Naive thymus-derived CD4-positive, alpha-beta T cell (primary cell): ENCODE measurements at regions of chr6 and their contacts with region 1.

Region 1: GRCh38 chr6:53348371-53349208 is at the start of gene ELOVL5:
- DNase-seq: peak; percentile 78 to 97 (median 87)
- ATAC-seq: peak; percentile 87
- H3K4me3 ChIP-seq: peak within 1 kb of the TSS; percentile 65
- H3K4me3 Mint-ChIP-seq: peak within 1 kb of the TSS; percentile 91 to 100 (median 98)
- H3K27ac ChIP-seq: peak within 1 kb of the TSS; percentile 89
- H3K27ac Mint-ChIP-seq: peak within 1 kb of the TSS; percentile 85 to 99 (median 96)
- H3K4me1 ChIP-seq: peaks cover 23 to 30% of the 10 kb centered on the region in 2 donors
- H3K4me1 Mint-ChIP-seq: peaks cover 34 to 48% (median 46%) of the 10 kb centered on the region in 7 donors
- H3K27me3 ChIP-seq: no peaks in the 10 kb centered on the region
- H3K27me3 Mint-ChIP-seq: peaks cover 0 to 18% (median 0%) of the 10 kb centered on the region in 5 donors
- total RNA-seq, gene ELOVL5: 49.7 to 124 (median 71.3) TPM

Region 2: DNA sequence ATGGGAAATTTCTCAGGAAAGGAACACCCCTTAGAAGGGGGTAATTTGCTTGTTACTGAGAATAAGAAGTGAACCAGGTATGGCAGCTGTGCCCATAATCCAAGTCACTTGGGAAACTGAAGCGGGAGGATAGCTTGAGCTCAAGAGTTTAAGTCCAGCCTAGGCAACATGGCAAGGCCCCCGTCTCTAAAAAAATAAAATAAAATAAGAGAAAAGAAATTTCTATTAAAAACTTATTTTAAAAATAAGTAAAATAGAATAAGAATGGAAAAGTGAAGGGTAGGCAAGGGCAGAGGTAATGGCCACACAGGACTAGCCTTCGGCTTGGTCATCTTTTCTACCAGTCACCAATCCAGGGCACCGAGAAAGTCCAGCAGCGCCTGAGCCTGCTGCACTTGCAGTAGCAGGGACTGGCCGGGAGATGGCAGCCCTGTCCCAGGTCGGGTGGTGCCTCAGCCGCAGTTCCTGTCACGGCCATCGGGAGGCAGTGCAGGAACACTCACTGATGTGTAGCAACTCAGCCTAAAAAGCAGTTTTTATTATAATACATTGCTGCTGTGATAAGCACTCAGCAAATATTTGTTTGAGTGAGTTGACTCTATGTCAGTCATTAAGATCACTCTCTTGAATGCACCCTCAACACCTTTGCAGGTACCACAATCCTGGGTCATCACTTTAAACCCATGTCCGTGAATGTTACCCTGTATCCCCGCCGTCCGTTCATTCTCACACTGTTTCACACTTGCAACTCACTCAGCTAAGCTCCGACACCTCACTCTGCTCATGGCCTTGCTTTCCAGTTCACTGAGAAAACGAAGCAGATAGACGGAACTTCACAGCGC is 176.8 kb before region 1 on chr6:
- CTCF ChIA-PET with region 1: no interaction called
- POLR2A ChIA-PET with region 1: interaction called, 4 read pairs
- intact Hi-C with region 1: loop called in 1 of 2 experiments (anchors 1 kb)
- DNase-seq: peak; percentile 76 to 95 (median 87)
- ATAC-seq: peak; percentile 100
- H3K4me3 ChIP-seq: no peak overlapping the region
- H3K4me3 Mint-ChIP-seq: no peak overlapping the region
- H3K27ac ChIP-seq: no peak overlapping the region
- H3K27ac Mint-ChIP-seq: no peak overlapping the region
- H3K4me1 ChIP-seq: no peaks in the 10 kb centered on the region
- H3K4me1 Mint-ChIP-seq: peaks cover 0 to 6% (median 0%) of the 10 kb centered on the region in 7 donors
- H3K27me3 ChIP-seq: no peaks in the 10 kb centered on the region
- H3K27me3 Mint-ChIP-seq: peaks cover 0 to 3% (median 0%) of the 10 kb centered on the region in 5 donors

Region 3: DNA sequence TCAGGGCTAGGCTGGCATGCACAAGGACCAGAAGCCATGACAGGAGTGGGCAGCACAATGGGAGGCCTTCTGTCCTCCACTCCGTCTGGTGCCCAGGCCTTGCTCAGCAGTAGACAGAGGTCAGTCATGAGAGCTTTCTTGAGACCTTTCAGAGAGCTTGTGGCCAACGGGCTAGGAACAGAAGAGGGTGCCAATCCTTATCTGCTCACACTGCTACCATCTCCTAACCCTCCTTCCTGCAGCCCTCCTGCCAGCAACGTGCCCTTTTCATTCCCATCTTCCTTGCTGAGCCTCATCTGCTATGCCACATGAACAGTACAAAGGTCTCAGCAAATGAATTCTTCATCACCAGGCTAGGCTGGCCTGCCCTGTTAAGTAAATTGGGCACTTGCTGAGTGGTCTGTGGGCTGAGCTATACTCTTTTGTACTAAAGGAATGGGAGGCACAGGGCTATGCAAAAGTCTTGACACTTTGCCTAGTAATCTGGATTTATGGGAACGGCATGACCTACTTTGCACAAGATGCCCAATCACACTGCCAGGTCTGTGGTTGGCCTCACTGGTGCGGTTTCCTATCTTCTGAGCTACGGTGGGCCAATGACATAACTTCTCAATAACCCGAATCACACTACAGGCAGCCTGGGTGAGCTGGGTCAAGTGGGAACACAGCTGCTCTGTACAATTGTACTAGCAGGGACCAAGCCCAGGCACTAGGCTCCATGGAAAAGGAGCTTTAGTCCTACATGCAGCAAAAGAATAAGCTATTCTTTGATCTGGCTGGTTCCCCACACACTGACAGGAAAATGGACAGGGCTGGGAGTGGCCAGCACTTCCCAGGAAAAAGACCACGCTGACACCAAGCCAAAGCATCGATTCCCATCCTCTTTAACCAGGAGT is 47.7 kb before region 1 on chr6:
- CTCF ChIA-PET with region 1: interaction called, 4 read pairs
- POLR2A ChIA-PET with region 1: interaction called, 28 read pairs
- intact Hi-C with region 1: loop called (anchors 1 kb)
- DNase-seq: no peak
- ATAC-seq: peak; percentile 48
- H3K4me3 ChIP-seq: no peak overlapping the region
- H3K4me3 Mint-ChIP-seq: peak overlapping the region; percentile 5 to 74 (median 50)
- H3K27ac ChIP-seq: no peak overlapping the region
- H3K27ac Mint-ChIP-seq: peak overlapping the region; percentile 33 to 92 (median 68)
- H3K4me1 ChIP-seq: peaks cover 35 to 52% of the 10 kb centered on the region in 2 donors
- H3K4me1 Mint-ChIP-seq: peaks cover 53 to 84% (median 78%) of the 10 kb centered on the region in 7 donors
- H3K27me3 ChIP-seq: no peaks in the 10 kb centered on the region
- H3K27me3 Mint-ChIP-seq: no peaks in the 10 kb centered on the region

Region 4: DNA sequence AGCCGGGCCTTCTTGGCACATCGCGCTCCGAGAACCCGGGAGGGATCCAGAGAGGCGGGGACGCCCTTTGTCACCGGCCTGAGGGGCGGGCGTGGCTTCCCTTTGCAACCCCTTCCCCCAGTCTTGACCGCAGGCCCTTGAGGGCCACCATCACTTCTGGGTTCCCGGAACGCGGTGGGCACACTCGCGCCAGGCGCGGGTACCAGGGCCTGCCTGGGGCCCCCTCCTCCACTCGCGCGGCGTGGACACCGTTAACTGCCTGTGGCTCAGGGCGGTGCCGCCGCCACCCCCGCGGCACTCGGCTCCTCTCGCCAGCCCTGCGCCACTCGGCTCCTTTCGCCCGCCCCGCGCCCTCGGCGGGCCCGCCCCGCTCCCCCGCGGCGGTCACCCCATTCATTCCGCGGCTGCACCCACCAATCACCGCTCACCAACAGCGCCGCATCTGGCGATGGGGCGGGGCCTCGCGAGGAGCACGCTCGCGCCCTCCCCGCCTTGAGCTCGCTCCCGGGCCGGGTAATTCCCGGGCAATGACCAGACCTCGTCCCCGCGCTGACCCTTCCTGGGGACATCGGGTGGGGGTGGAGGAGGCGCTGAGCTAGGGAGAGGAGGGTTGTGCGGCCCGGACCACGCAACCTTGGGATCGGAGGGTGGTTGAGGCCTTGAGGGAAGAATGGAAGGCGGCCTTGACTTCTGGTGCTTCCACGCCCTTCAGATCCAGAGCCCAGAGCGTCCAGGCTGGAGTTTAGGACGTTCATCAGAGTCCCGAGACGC is 10.7 kb after region 1 on chr6:
- CTCF ChIA-PET with region 1: interaction called, 3 read pairs
- POLR2A ChIA-PET with region 1: interaction called, 50 read pairs
- intact Hi-C with region 1: loop called (anchors 1 kb)
- DNase-seq: peak; percentile 79 to 96 (median 89)
- ATAC-seq: peak; percentile 91
- H3K4me3 ChIP-seq: peak overlapping the region; percentile 76
- H3K4me3 Mint-ChIP-seq: peak overlapping the region; percentile 78 to 94 (median 90)
- H3K27ac ChIP-seq: peak overlapping the region; percentile 88
- H3K27ac Mint-ChIP-seq: peak overlapping the region; percentile 87 to 99 (median 98)
- H3K4me1 ChIP-seq: peaks cover 33 to 41% of the 10 kb centered on the region in 2 donors
- H3K4me1 Mint-ChIP-seq: peaks cover 24 to 54% (median 43%) of the 10 kb centered on the region in 7 donors
- H3K27me3 ChIP-seq: no peaks in the 10 kb centered on the region
- H3K27me3 Mint-ChIP-seq: peaks cover 0 to 4% (median 0%) of the 10 kb centered on the region in 5 donors

Region 5: DNA sequence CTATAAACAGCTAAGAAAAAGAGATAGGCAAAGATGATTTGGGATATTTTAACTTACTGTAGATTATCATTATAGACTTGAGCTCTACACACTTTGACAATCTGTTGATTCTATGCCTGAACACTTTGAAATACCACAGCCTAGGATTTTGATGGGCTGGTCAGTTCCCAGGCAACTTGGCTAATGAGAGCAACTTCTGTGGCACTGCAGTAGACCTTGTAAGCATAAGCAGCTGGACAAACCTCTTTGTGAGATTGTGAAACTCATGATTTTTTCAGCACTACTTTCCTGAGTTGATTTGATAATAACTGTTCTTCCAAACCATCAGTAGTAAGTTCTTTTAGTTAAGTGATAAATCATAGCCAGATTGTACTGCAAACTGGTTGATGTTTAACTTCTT is 27.3 kb after region 1 on chr6:
- CTCF ChIA-PET with region 1: no interaction called
- POLR2A ChIA-PET with region 1: no interaction called
- intact Hi-C with region 1: no loop called
- DNase-seq: no peak
- ATAC-seq: no peak
- H3K4me3 ChIP-seq: no peak overlapping the region
- H3K4me3 Mint-ChIP-seq: no peak overlapping the region
- H3K27ac ChIP-seq: no peak overlapping the region
- H3K27ac Mint-ChIP-seq: no peak overlapping the region
- H3K4me1 ChIP-seq: no peaks in the 10 kb centered on the region
- H3K4me1 Mint-ChIP-seq: no peaks in the 10 kb centered on the region
- H3K27me3 ChIP-seq: no peaks in the 10 kb centered on the region
- H3K27me3 Mint-ChIP-seq: peaks cover 0 to 47% (median 0%) of the 10 kb centered on the region in 5 donors

Region 6: DNA sequence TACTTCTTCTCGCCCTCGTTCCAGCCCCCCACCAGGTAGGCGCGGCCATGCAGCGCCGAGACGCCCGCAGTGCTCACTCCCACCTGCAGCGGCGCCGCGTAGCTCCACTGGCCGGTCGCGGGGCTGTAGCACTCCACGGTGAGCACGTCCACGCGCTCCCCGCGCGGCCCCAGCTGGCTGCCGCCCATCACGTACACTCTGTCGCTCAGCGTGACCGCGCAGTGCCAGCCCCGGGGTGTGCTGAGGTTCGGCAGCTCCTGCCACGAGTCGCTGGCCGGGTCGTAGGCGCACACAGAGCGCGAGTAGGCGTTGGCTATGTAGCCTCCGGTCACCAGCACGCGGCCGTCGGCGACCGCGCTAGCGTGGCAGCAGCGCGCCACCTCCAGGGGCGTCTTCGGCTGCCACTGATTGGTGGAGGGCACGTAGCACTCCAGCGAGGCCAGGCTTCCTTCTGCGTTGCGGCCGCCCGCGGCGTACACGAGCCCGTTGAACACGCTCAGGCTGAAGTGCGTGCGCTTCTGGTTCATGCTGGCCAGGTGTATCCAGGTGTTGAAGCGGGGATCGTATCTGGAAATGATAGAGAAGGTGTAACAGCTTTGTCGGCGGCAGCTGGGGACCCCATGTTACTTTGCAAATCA is 303.3 kb after region 1 on chr6:
- CTCF ChIA-PET with region 1: no interaction called
- POLR2A ChIA-PET with region 1: no interaction called
- intact Hi-C with region 1: loop called (anchors 5 kb)
- DNase-seq: peak; percentile 62 to 82 (median 74)
- ATAC-seq: peak; percentile 94
- H3K4me3 ChIP-seq: peak overlapping the region; percentile 91
- H3K4me3 Mint-ChIP-seq: peak overlapping the region; percentile 90 to 99 (median 94)
- H3K27ac ChIP-seq: peak overlapping the region; percentile 45
- H3K27ac Mint-ChIP-seq: peak overlapping the region; percentile 65 to 93 (median 84)
- H3K4me1 ChIP-seq: peaks cover 9 to 15% of the 10 kb centered on the region in 2 donors
- H3K4me1 Mint-ChIP-seq: peaks cover 14 to 34% (median 21%) of the 10 kb centered on the region in 7 donors
- H3K27me3 ChIP-seq: no peaks in the 10 kb centered on the region
- H3K27me3 Mint-ChIP-seq: peaks cover 0 to 35% (median 0%) of the 10 kb centered on the region in 5 donors

Region 7: GRCh38 chr6:54617730-54618129 is 1269.1 kb after region 1 on chr6:
- CTCF ChIA-PET with region 1: no interaction called
- POLR2A ChIA-PET with region 1: no interaction called
- intact Hi-C with region 1: no loop called
- DNase-seq: no peak
- ATAC-seq: no peak
- H3K4me3 ChIP-seq: no peak overlapping the region
- H3K4me3 Mint-ChIP-seq: no peak overlapping the region
- H3K27ac ChIP-seq: no peak overlapping the region
- H3K27ac Mint-ChIP-seq: no peak overlapping the region
- H3K4me1 ChIP-seq: no peaks in the 10 kb centered on the region
- H3K4me1 Mint-ChIP-seq: no peaks in the 10 kb centered on the region
- H3K27me3 ChIP-seq: no peaks in the 10 kb centered on the region
- H3K27me3 Mint-ChIP-seq: no peaks in the 10 kb centered on the region